ENCODE measurements at regions of chr1 and their contacts with region 1.

Region 1: DNA sequence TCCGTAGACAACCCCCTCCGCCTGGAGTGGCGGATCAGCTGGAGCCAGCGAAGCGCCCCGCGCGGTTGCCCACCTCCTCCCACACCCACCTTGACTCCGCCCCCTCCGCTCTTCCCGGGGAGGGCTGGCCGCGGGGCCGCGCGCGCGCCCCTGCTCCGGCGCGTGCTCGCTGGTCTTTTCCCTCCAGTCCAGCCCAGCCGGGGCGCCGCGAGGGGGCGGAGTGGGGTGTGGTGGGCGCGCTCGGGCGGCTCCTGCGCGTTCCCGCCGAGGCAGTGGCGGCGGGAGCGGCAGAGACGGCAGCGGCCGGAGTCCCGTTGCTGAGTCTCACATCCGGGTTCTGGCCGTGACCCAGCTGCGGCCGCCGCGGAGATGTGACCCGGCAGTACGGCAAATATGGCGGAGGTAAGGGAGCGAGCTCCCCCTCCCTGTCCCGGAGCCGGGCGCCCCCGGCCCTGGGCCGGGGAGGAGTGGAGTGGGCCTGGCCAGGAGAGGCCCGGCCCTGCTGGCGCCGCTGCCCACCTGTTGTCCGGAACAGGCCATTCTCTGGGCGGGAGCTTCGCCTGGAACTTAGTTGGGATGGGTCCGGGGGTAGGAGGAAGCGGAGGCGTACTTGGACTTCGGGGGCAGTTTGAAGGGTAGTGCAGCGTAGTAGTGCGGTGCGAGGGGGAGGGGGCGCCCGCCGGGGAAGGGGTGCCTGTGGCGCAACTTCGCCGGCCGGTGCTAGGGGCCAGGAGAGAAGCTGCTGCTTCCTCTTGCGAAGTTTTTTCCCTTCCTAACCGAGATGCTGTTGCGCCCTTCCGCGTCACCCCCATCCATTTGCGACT is 5.4 kb downstream of the MIER1 start:
- DNase-seq: peak; percentile 97
- H3K4me3 ChIP-seq: peak overlapping the region; percentile 79 to 91 (median 87)
- H3K27ac ChIP-seq: peak overlapping the region; percentile 96 to 98 (median 98)
- H3K4me1 ChIP-seq: peaks cover 0 to 64% (median 54%) of the 10 kb centered on the region in 4 donors
- H3K27me3 ChIP-seq: no peaks in the 10 kb centered on the region
- CTCF ChIP-seq: no peak
- EP300 ChIP-seq: no peak
- POLR2A ChIP-seq: peak; percentile 48 to 55

Region 2: GRCh38 chr1:66981679-66982078 is 51.5 kb after region 1 on chr1:
- intact Hi-C with region 1: loop called (anchors 5 kb)
- DNase-seq: peak; percentile 74
- H3K4me3 ChIP-seq: peak overlapping the region; percentile 3 to 46 (median 36)
- H3K27ac ChIP-seq: peak overlapping the region; percentile 8 to 74 (median 64)
- H3K4me1 ChIP-seq: peaks cover 0 to 19% (median 10%) of the 10 kb centered on the region in 4 donors
- H3K27me3 ChIP-seq: no peaks in the 10 kb centered on the region
- CTCF ChIP-seq: no peak
- EP300 ChIP-seq: no peak
- POLR2A ChIP-seq: no peak

Region 3: DNA sequence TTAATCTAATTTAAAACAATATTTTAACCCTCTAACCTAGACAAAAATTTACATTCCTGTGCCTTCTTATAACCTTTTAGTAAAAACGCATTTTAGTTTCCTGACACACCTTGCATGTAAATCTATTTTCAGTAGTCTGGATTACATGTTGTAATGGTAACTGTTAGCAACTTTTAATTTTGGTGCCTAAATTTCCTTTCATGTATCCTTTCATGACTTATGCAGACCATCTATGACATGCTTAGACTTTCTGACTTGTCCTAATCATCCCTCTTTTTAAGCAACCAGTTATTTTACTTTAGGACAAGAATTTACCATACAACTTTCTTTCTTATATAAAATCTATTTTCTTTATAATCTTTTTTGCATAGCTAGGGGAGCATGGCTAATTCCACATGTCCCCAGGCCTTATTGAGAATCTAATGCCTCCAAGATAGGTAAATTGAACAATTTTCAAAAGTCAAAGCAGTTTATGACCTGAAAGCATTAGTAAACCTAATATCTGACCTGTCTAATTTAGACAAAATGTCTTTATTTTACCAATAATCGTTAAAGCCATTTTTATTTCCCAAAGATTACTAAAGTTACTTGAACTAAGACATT is 319.9 kb after region 1 on chr1:
- intact Hi-C with region 1: no loop called
- DNase-seq: no peak
- H3K4me3 ChIP-seq: no peak overlapping the region
- H3K27ac ChIP-seq: no peak overlapping the region
- H3K4me1 ChIP-seq: no peaks in the 10 kb centered on the region
- H3K27me3 ChIP-seq: no peaks in the 10 kb centered on the region
- CTCF ChIP-seq: no peak
- EP300 ChIP-seq: no peak
- POLR2A ChIP-seq: no peak

Region 4: DNA sequence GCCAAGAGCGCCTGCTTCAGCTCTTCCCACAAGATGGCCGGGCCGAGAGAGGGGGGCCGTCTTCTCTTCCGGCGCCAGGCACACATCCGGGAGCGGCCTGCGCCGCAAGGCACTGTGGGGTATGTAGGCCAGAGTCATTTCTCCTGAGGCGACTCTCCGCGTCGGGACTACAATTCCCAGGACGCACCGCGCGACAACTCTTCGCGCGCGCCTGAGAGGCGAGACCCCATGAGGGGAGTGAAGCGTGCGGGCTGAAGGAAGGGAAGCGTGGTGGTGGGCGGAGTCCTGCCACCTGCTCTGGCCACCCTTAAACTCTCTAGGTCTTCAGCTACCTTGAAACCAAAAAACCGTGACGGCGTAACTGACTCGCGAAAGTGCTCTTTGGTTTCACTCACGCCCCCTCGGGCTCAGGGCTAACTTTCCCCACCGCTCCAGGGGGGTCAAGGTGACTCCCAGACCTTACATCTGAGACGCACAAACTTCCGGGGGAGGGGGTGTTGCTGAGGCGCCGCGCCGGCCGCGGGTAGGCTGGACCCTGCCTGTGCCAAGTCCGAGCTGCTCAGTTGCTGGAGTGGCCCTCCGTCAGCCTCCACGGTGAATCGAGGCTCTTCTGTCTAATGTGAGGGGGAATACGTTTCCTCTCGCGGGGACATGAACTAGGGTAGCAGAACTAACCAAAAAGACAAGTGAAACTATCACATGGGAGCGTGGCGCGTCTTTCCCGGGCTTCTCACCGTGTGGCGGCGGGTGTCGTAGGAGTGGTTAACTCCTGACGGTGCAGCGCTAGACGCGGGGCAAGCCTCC is 500.3 kb after region 1 on chr1 and contains the start of gene SERBP1:
- intact Hi-C with region 1: loop called (anchors 2 kb)
- DNase-seq: peak; percentile 97
- H3K4me3 ChIP-seq: peak within 1 kb of the TSS; percentile 62 to 83 (median 78)
- H3K27ac ChIP-seq: peak within 1 kb of the TSS; percentile 92 to 96 (median 94)
- H3K4me1 ChIP-seq: peaks cover 0 to 61% (median 37%) of the 10 kb centered on the region in 4 donors
- H3K27me3 ChIP-seq: no peaks in the 10 kb centered on the region
- CTCF ChIP-seq: no peak
- EP300 ChIP-seq: no peak
- POLR2A ChIP-seq: peak in 1 of 2 donors; percentile 52
- total RNA-seq, gene SERBP1: 201 to 236 (median 225) TPM